Sigmoid colon (tissue), 7 donors: ENCODE measurements at regions of chr14 and their contacts with region 1.

Region 1: DNA sequence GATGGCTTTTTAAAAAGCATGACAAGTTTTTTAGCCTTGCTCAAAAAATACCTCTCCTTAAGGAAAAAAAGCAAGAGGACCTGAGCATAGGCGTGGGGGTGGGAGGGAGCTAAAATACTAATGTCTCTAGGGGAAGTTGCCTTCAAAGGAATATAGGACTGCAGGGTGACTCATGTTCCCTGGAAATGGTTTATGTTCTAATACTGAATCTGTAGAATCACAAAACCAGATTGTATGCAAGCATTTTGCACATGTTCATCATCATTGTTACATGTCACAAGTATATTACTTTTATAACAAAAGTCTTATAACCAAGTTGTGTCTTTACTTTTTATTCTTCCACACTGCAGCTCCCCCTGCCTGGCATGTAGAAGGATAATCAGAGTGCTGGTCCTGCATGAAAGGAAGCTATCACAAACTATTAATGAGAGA is 36.6 kb downstream of the GPR135 start:
- DNase-seq: no peak
- H3K4me3 ChIP-seq: no peak overlapping the region
- H3K27ac ChIP-seq: peak overlapping the region; percentile 41 to 70 (median 61)
- H3K4me1 ChIP-seq: peaks cover 0 to 31% (median 21%) of the 10 kb centered on the region in 4 donors
- H3K27me3 ChIP-seq: no peaks in the 10 kb centered on the region
- CTCF ChIP-seq: peak; percentile 30 to 34 (median 32)
- EP300 ChIP-seq: no peak
- POLR2A ChIP-seq: no peak

Region 2: GRCh38 chr14:59377991-59378601 is 50.5 kb before region 1 on chr14:
- intact Hi-C with region 1: loop called (anchors 5 kb)
- DNase-seq: peak; percentile 71
- H3K4me3 ChIP-seq: no peak overlapping the region
- H3K27ac ChIP-seq: peak overlapping the region; percentile 64 to 82 (median 73)
- H3K4me1 ChIP-seq: peaks cover 0 to 38% (median 18%) of the 10 kb centered on the region in 4 donors
- H3K27me3 ChIP-seq: no peaks in the 10 kb centered on the region
- CTCF ChIP-seq: no peak
- EP300 ChIP-seq: peak in 3 of 4 donors; percentile 1 to 59 (median 7)
- POLR2A ChIP-seq: no peak

Region 3: GRCh38 chr14:59619061-59619460 is 190.5 kb after region 1 on chr14:
- intact Hi-C with region 1: no loop called
- DNase-seq: no peak
- H3K4me3 ChIP-seq: no peak overlapping the region
- H3K27ac ChIP-seq: no peak overlapping the region
- H3K4me1 ChIP-seq: no peaks in the 10 kb centered on the region
- H3K27me3 ChIP-seq: no peaks in the 10 kb centered on the region
- CTCF ChIP-seq: no peak
- EP300 ChIP-seq: no peak
- POLR2A ChIP-seq: no peak